Right ventricle myocardium inferior (tissue), 1 donor: ENCODE measurements at regions of chr1 and their contacts with region 1.

Region 1: GRCh38 chr1:236893626-236894545 is 98.8 kb downstream of the MTR start:
- DNase-seq: no peak
- ATAC-seq: no peak

Region 2: DNA sequence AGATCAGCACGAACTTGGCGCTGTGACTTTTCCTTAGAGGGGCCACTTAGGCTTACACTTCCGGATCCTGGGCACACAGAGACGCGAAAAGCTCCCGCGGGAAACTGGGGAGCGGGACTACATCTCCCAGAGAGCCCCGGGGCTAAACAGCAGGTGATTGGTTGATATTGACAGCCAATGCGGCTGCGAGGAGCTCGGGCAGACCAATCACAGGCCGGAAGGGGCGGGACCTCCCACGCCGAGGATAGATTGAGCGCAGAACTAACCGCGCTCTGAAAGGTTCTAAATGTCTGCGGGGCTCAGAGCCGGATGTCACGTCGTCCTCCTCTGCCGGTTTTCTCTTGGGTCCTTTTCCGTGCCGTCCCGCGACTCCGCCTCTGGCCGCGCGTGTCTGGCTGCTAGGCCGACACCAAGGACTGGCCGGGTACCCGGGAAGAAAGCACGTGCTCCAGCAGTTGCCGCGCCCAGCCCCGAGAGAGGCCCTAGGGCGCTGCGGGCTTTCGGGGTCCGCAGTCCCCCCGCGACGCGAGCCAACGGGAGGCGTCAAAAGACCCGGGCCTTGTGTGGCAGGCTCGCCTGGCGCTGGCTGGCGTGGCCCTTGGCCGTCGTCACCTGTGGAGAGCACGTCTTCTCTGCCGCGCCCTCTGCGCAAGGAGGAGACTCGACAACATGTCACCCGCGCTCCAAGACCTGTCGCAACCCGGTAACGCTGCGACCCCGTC is 98.7 kb before region 1 on chr1 and contains the start of gene MTR:
- intact Hi-C with region 1: loop called (anchors 5 kb)
- DNase-seq: peak; percentile 99
- ATAC-seq: peak; percentile 99
- total RNA-seq, gene MTR: 49.0 TPM

Region 3: DNA sequence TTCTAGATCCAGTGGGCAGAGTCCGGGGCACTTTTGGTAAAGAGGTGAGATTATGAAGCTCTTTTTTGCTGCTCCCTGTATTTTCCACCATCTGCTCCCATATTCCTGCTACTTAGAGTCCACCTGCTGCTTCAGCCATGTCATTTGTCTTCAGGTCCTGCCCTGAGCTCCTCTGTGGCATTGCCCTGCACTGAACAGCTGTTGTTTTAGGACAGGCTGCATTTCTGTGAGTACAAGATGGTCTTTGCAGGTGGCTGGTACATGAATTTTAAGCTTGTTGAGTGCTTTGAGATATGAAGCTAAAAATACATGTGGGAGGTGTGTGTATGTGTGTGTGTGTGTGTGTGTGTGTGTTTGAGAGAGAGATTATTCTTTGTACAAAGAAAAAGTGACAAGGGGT is 88.5 kb after region 1 on chr1:
- intact Hi-C with region 1: loop called (anchors 5 kb)
- DNase-seq: no peak
- ATAC-seq: peak; percentile 75

Region 4: GRCh38 chr1:236997882-236998281 is 104.0 kb after region 1 on chr1:
- intact Hi-C with region 1: loop called (anchors 1 kb)
- DNase-seq: peak; percentile 79
- ATAC-seq: peak; percentile 89

Region 5: DNA sequence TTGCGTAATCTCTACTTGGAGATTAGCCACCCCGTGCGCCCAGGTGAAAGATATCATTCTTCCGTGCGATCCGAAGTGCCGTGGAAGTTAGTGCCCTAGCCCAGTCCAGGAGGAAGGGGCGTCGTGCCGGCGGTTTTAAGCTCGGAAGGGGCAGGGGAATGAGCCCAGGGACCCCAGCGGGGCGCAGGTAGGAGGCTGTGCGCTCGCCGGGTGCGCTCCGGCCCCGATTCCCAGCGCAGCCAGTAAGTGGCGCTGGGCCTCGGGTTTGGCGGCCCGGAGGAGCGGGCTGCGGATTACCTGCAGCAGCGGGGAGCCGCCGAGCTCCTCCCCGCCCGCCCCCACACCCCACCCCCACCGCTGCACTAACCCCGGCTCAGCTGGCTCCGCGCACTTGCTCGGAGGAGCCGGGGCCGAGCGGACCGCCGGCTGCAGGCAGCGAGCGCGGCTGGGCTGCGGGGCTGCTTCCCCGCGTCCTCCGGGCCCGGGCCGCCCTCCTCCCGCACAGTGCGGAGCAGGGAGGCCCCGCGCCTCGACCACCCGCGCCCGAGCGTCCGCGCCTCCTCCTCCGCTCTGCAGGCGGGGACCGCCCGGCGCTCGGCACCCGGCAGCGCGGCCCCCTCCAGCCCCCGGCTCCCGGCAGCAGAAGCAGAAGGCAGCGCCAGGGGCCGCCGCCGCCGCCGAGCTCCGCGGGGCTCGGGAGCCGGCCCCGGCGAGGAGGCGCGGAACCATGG is 148.1 kb after region 1 on chr1 and contains the start of gene RYR2:
- intact Hi-C with region 1: loop called (anchors 10 kb)
- DNase-seq: peak; percentile 72
- ATAC-seq: peak; percentile 60
- total RNA-seq, gene RYR2: 694 TPM